IMR-90 (cell line): ENCODE measurements at regions of chr3 and their contacts with region 1.

Region 1: DNA sequence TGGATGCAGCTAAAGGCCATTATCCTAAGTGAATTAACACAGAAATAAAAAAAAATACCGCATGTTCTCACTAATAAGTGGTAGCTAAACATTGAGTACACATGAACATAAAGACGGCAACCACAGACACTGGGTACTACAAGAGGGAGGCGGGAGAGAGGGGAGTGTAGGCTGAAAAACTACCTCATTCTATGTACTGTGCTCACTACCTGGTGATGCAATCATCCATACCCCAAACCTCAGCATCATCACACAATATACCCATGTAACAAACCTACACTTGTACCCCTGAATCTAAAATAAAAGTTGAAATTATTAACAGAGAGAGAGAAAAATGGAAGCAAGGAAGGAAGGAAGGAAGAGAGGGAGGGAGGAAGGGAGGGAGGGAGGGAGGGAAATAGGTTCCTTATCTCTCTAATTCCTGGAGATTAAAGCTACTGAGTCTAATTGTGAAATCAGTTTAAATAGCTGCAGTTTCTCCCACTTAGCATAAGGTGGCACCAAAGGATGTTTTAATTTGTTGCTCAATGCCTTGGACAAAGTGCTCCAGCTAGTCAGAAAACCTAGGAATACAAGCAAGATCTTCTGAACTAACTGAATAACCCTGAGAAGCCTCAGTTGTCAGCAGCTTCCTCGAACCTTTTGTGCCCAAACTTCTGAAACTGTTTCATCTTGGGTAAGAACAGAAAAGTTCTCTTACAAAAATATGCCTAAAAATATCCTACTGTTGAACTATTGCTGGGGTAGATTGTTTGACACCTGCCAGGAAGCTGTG is 79.4 kb upstream of the ATP11B start:
- DNase-seq: peak; percentile 79
- ATAC-seq: peak; percentile 92
- H3K4me3 ChIP-seq: no peak overlapping the region
- H3K27ac ChIP-seq: no peak overlapping the region
- H3K4me1 ChIP-seq: no peaks in the 10 kb centered on the region
- H3K27me3 ChIP-seq: peaks cover 3% of the 10 kb centered on the region
- CTCF ChIP-seq: peak; percentile 81
- POLR2A ChIP-seq: no peak
- RAD21 ChIP-seq: peak; percentile 82

Region 2: GRCh38 chr3:182139627-182140357 is 574.1 kb before region 1 on chr3:
- CTCF ChIA-PET with region 1: no interaction called
- POLR2A ChIA-PET with region 1: no interaction called
- dilution Hi-C with region 1: no loop called
- in situ Hi-C with region 1: no loop called
- intact Hi-C with region 1: no loop called
- DNase-seq: no peak
- ATAC-seq: no peak
- H3K4me3 ChIP-seq: no peak overlapping the region
- H3K27ac ChIP-seq: no peak overlapping the region
- H3K4me1 ChIP-seq: no peaks in the 10 kb centered on the region
- H3K27me3 ChIP-seq: no peaks in the 10 kb centered on the region
- CTCF ChIP-seq: no peak
- POLR2A ChIP-seq: no peak
- RAD21 ChIP-seq: no peak

Region 3: GRCh38 chr3:182567700-182568099 is 146.2 kb before region 1 on chr3:
- CTCF ChIA-PET with region 1: no interaction called
- POLR2A ChIA-PET with region 1: no interaction called
- dilution Hi-C with region 1: no loop called
- in situ Hi-C with region 1: no loop called
- intact Hi-C with region 1: no loop called
- DNase-seq: no peak
- ATAC-seq: no peak
- H3K4me3 ChIP-seq: no peak overlapping the region
- H3K27ac ChIP-seq: no peak overlapping the region
- H3K4me1 ChIP-seq: no peaks in the 10 kb centered on the region
- H3K27me3 ChIP-seq: no peaks in the 10 kb centered on the region
- CTCF ChIP-seq: no peak
- POLR2A ChIP-seq: no peak
- RAD21 ChIP-seq: no peak

Region 4: DNA sequence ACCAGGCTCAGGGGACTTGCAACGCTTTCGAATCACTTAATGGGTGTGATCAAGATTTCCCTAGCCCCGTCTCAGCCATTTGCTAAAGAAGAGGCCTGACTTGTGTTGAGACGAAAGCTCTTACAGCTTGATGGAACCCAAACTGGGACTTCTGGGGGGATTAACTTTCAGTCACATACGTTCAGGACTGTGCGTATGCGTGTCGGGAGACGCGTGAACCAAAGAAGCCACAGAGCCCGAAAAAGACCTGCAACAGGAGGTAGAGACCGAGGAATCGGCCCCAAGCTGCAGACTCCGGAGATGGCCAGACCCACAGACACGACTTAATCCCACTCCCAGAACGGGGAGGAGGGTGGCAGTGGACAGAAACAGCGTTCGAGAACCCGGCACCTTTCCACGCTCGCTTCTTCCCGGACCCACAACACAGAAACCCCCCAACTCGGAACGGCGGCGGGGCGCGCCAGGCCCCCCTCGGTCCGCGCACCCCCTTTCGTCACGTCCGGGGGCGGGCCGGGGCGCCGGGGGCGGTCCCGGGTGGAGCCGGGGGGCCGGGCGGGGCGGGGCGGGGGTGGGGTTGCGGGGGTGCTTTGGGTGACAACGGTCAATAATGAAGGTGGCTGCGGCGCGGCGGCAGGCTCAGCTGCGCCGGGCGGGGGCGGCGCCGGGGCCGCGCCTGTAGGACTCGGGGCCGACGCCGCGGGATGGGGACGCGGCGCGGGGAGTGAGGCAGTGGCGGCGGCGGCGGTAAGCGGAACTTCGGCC is 79.2 kb after region 1 on chr3 and contains the start of gene ATP11B:
- CTCF ChIA-PET with region 1: interaction called, 3 read pairs
- POLR2A ChIA-PET with region 1: no interaction called
- dilution Hi-C with region 1: no loop called
- in situ Hi-C with region 1: no loop called
- intact Hi-C with region 1: loop called (anchors 2 kb)
- DNase-seq: peak; percentile 41
- ATAC-seq: peak; percentile 87
- H3K4me3 ChIP-seq: peak within 1 kb of the TSS; percentile 78
- H3K27ac ChIP-seq: peak within 1 kb of the TSS; percentile 92
- H3K4me1 ChIP-seq: no peaks in the 10 kb centered on the region
- H3K27me3 ChIP-seq: peaks cover 2% of the 10 kb centered on the region; the same call in 1 of the 2 replicates
- CTCF ChIP-seq: no peak
- POLR2A ChIP-seq: no peak; the same call in 1 of the 2 replicates
- RAD21 ChIP-seq: no peak
- total RNA-seq, gene ATP11B: 39.6 and 66.4 TPM in 2 replicates

Region 5: GRCh38 chr3:182837855-182838454 is 124.0 kb after region 1 on chr3:
- CTCF ChIA-PET with region 1: interaction called, 5 read pairs
- POLR2A ChIA-PET with region 1: no interaction called
- dilution Hi-C with region 1: no loop called
- in situ Hi-C with region 1: loop called (anchors 5 kb)
- intact Hi-C with region 1: loop called (anchors 1 kb)
- DNase-seq: peak; percentile 48
- ATAC-seq: peak; percentile 35; the same call in 1 of the 2 replicates
- H3K4me3 ChIP-seq: no peak overlapping the region
- H3K27ac ChIP-seq: no peak overlapping the region
- H3K4me1 ChIP-seq: no peaks in the 10 kb centered on the region
- H3K27me3 ChIP-seq: no peaks in the 10 kb centered on the region
- CTCF ChIP-seq: peak; percentile 45
- POLR2A ChIP-seq: no peak
- RAD21 ChIP-seq: peak; percentile 46; the same call in 1 of the 2 replicates

Region 6: DNA sequence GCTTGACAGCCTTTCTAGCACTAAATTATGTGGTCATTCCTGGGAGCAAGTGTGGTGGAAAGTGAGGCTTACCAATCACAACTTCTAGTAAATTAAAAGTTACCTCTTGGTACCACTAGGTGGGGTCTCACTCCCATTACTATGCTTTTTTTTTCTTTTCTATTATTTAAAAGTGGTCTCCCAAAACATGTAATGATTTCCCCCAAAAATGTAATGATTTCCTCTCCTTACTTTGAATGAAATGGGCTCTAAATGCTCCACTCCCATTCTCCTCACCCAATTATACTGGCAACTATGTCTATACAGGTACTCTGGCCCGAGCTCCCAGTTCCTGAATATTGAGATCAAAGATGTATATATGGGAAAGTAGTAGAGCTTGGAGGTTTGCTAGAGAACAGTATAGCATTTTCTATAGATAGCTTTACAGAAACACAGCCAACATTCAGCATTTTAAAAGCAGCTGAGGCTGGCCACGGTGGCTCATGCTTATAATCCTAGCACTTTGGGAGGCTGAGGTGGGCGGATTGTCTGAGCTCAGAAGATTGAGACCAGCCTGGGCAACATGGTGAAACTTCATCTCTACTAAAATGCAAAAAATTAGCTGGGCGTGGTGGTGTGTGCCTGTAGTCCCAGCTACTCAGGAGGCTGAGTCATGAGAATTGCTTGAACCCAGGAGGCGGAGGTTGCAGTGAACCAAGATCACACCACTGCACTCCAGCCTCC is 195.5 kb after region 1 on chr3:
- CTCF ChIA-PET with region 1: no interaction called
- POLR2A ChIA-PET with region 1: no interaction called
- dilution Hi-C with region 1: no loop called
- in situ Hi-C with region 1: no loop called
- intact Hi-C with region 1: loop called (anchors 10 kb)
- DNase-seq: no peak
- ATAC-seq: peak; percentile 48; the same call in 1 of the 2 replicates
- H3K4me3 ChIP-seq: no peak overlapping the region
- H3K27ac ChIP-seq: no peak overlapping the region
- H3K4me1 ChIP-seq: peaks cover 14% of the 10 kb centered on the region
- H3K27me3 ChIP-seq: no peaks in the 10 kb centered on the region
- CTCF ChIP-seq: peak; percentile 56
- POLR2A ChIP-seq: no peak
- RAD21 ChIP-seq: peak; percentile 47

Region 7: DNA sequence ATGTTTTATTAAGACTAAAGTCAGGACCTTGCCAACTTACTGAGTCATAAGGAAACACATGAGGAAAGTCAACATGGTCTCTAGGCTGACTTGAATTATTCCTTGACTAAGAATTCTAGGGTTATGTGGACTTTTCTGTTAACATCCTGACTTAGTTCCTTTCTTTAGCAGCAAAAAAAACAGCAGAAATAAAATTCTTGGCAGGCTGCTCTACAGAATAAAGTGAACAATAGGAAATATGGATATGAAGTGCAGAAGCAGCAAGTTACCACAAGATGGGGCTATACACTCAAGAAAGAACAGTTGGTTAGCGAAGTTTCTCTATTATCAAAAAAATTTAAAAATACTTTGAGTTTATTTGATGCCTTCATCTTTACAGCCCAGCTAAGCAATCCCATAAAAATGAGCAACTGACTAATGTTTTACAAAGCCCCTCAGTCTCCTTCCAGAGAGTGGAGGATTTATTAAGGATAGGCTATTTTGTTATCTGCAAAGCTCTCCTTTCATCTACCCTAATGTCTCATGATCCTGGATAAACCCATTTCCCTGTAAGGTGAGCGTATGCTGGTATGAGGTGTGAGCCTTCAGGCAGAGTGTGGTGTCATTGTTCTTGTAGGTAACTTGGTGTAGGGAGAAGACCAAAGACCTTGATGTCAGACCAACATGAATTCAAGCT is 408.5 kb after region 1 on chr3:
- CTCF ChIA-PET with region 1: no interaction called
- POLR2A ChIA-PET with region 1: no interaction called
- dilution Hi-C with region 1: no loop called
- in situ Hi-C with region 1: no loop called
- intact Hi-C with region 1: loop called (anchors 1 kb)
- DNase-seq: peak; percentile 74
- ATAC-seq: peak; percentile 78
- H3K4me3 ChIP-seq: no peak overlapping the region
- H3K27ac ChIP-seq: no peak overlapping the region
- H3K4me1 ChIP-seq: 0 out of 2 replicates have a peak, but pooled peaks cover 2% of the 10 kb centered on the region
- H3K27me3 ChIP-seq: peaks cover 12% of the 10 kb centered on the region
- CTCF ChIP-seq: peak; percentile 93
- POLR2A ChIP-seq: no peak
- RAD21 ChIP-seq: peak; percentile 87

Region 8: DNA sequence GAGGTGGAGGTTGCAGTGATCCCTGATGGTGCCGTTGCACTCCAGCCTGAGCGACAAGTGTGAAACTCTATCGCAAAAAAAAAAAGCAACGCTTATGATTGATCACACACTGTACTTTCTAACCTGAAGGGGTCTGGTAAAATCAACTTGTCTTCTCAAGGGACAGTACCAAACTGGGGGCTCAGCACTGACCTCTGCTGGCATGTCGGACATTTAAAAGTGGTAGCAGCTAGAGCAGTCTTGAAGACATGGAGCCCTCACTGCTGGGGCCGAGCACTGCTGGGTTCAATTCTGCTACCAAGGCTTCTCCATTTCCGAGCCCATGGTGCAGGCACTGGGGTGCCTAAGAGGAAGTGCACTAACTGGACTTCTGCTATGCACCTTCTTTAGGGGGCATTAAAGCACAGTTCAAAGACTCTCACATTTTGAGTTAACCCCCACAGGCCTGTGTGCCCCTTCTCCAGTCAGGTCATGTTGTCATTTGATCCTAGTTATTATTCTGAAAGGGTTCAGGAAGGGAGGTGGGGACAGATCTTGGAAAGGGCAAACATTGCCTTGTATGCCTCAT is 475.0 kb after region 1 on chr3:
- CTCF ChIA-PET with region 1: no interaction called
- POLR2A ChIA-PET with region 1: no interaction called
- dilution Hi-C with region 1: no loop called
- in situ Hi-C with region 1: no loop called
- intact Hi-C with region 1: loop called (anchors 10 kb)
- DNase-seq: no peak
- ATAC-seq: no peak
- H3K4me3 ChIP-seq: no peak overlapping the region
- H3K27ac ChIP-seq: no peak overlapping the region
- H3K4me1 ChIP-seq: peaks cover 10% of the 10 kb centered on the region
- H3K27me3 ChIP-seq: no peaks in the 10 kb centered on the region; the same call in 1 of the 2 replicates
- CTCF ChIP-seq: peak; percentile 35
- POLR2A ChIP-seq: no peak
- RAD21 ChIP-seq: no peak